ENCODE measurements at regions of chr2 and their contacts with region 1.

Region 1: DNA sequence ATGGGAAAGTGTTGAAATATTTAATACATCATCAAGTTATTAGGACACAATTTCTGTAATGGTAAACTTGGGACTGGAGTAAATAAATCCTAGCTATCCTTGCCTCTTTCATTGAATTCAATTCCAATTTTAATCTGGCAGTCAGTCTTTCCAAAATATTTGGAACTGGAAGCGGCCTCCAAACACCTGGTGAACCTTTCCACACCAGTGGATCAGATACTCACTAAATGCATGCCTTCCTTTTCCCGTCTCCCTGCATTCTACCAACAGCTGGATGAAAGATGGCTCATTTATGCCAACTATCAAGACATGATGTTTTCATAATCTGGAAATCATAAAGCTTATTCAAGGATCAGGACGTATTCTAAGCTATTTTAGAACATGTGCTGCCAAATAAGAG is 488.2 kb upstream of the SPHKAP start:
- DNase-seq: no peak
- ATAC-seq: no peak

Region 2: GRCh38 chr2:227884511-227884947 is 785.2 kb before region 1 on chr2:
- intact Hi-C with region 1: loop called in 1 of 2 experiments (anchors 10 kb)
- DNase-seq: peak; percentile 62
- ATAC-seq: peak in 1 of 2 donors; percentile 55